ENCODE measurements at regions of chrX and their contacts with region 1.

Region 1: GRCh38 chrX:103404231-103405208 is 28.2 kb downstream of the BEX3 start:
- DNase-seq: peak; percentile 48
- H3K4me3 ChIP-seq: peak overlapping the region; percentile 42 to 60 (median 56)
- H3K27ac ChIP-seq: peak overlapping the region; percentile 74
- H3K4me1 ChIP-seq: peaks cover 4% of the 10 kb centered on the region
- H3K27me3 ChIP-seq: no peaks in the 10 kb centered on the region
- CTCF ChIP-seq: no peak

Region 2: GRCh38 chrX:103367502-103367901 is 37.0 kb before region 1 on chrX:
- CTCF ChIA-PET with region 1: no interaction called
- dilution Hi-C with region 1: loop called (anchors 5 kb)
- in situ Hi-C with region 1: no loop called
- intact Hi-C with region 1: no loop called
- DNase-seq: peak; percentile 60
- H3K4me3 ChIP-seq: no peak overlapping the region
- H3K27ac ChIP-seq: peak overlapping the region; percentile 37
- H3K4me1 ChIP-seq: peaks cover 18% of the 10 kb centered on the region
- H3K27me3 ChIP-seq: no peaks in the 10 kb centered on the region
- CTCF ChIP-seq: no peak

Region 3: GRCh38 chrX:103431316-103431715 is 26.8 kb after region 1 on chrX:
- CTCF ChIA-PET with region 1: no interaction called
- dilution Hi-C with region 1: no loop called
- in situ Hi-C with region 1: no loop called
- intact Hi-C with region 1: no loop called
- DNase-seq: peak; percentile 28
- H3K4me3 ChIP-seq: no peak overlapping the region
- H3K27ac ChIP-seq: no peak overlapping the region
- H3K4me1 ChIP-seq: no peaks in the 10 kb centered on the region
- H3K27me3 ChIP-seq: no peaks in the 10 kb centered on the region
- CTCF ChIP-seq: no peak

Region 4: GRCh38 chrX:103453655-103454054 is 49.1 kb after region 1 on chrX:
- CTCF ChIA-PET with region 1: no interaction called
- dilution Hi-C with region 1: no loop called
- in situ Hi-C with region 1: no loop called
- intact Hi-C with region 1: loop called (anchors 2 kb)
- DNase-seq: peak; percentile 93
- H3K4me3 ChIP-seq: no peak overlapping the region
- H3K27ac ChIP-seq: peak overlapping the region; percentile 93
- H3K4me1 ChIP-seq: peaks cover 5% of the 10 kb centered on the region
- H3K27me3 ChIP-seq: no peaks in the 10 kb centered on the region
- CTCF ChIP-seq: no peak